ENCODE measurements at regions of chr5 and their contacts with region 1.

Region 1: GRCh38 chr5:80569961-80570786 is at the start of gene ANKRD34B:
- H3K4me3 Mint-ChIP-seq: peak within 1 kb of the TSS; percentile 60
- H3K27ac Mint-ChIP-seq: no peak within 1 kb of the TSS
- H3K4me1 Mint-ChIP-seq: peaks cover 15% of the 10 kb centered on the region
- H3K27me3 Mint-ChIP-seq: peaks cover 80% of the 10 kb centered on the region

Region 2: DNA sequence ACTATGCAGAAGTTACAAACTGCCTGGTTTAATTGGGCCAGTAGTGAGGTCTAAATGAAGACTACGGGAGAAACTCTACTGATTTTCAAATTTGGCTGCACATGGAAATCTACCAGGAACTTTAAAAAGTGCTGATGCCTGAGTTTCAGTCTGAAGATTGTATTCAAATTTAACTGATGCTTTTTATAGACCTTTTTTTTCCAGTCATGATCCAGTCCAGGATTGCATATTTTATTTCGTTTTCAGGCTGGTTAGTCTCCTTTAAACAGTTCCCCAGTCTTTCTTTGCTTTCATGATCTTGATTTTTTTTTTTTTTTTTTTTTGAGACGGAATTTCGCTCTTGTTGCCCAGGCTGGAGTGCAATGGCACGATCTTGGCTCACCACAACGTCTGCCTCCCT is 274.1 kb before region 1 on chr5:
- intact Hi-C with region 1: no loop called
- H3K4me3 Mint-ChIP-seq: no peak overlapping the region
- H3K27ac Mint-ChIP-seq: no peak overlapping the region
- H3K4me1 Mint-ChIP-seq: no peaks in the 10 kb centered on the region
- H3K27me3 Mint-ChIP-seq: no peaks in the 10 kb centered on the region

Region 3: DNA sequence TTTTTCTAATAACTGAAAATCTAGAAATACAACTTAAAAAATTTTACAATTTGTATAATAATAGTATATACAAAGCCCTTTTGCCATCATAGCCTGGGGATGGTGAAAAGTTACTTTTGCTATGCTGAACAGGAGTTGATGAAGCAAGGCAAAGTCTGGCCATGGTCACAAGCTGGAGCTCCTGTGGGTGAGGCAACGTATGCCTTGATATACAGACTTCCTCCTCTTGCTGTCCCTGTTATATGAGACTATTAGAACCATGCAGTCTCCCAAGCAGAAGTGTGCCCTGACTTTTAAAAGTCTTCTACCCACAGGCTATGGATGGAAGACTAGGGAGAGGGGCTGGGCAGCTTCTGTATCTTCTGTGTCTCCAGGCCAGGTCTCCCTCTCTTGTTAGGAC is 66.5 kb before region 1 on chr5:
- intact Hi-C with region 1: loop called (anchors 10 kb)
- H3K4me3 Mint-ChIP-seq: no peak overlapping the region
- H3K27ac Mint-ChIP-seq: no peak overlapping the region
- H3K4me1 Mint-ChIP-seq: peaks cover 22% of the 10 kb centered on the region
- H3K27me3 Mint-ChIP-seq: no peaks in the 10 kb centered on the region

Region 4: GRCh38 chr5:80607832-80608231 is 37.7 kb after region 1 on chr5:
- intact Hi-C with region 1: no loop called
- H3K4me3 Mint-ChIP-seq: no peak overlapping the region
- H3K27ac Mint-ChIP-seq: no peak overlapping the region
- H3K4me1 Mint-ChIP-seq: peaks cover 17% of the 10 kb centered on the region
- H3K27me3 Mint-ChIP-seq: no peaks in the 10 kb centered on the region